ENCODE measurements at regions of chr4 and their contacts with region 1.

Region 1: GRCh38 chr4:76504613-76505465 is 69.8 kb downstream of the SHROOM3 start:
- DNase-seq: no peak
- H3K4me3 ChIP-seq: no peak overlapping the region
- H3K27ac ChIP-seq: no peak overlapping the region
- H3K4me1 ChIP-seq: no peaks in the 10 kb centered on the region
- H3K27me3 ChIP-seq: no peaks in the 10 kb centered on the region
- CTCF ChIP-seq: peak; percentile 60 to 76 (median 68)
- EP300 ChIP-seq: no peak
- POLR2A ChIP-seq: no peak

Region 2: GRCh38 chr4:76293772-76294171 is 211.1 kb before region 1 on chr4:
- in situ Hi-C with region 1: no loop called
- intact Hi-C with region 1: no loop called
- DNase-seq: no peak
- H3K4me3 ChIP-seq: no peak overlapping the region
- H3K27ac ChIP-seq: no peak overlapping the region
- H3K4me1 ChIP-seq: peaks cover 0 to 5% (median 0%) of the 10 kb centered on the region in 4 donors
- H3K27me3 ChIP-seq: no peaks in the 10 kb centered on the region
- CTCF ChIP-seq: no peak
- EP300 ChIP-seq: no peak
- POLR2A ChIP-seq: no peak

Region 3: GRCh38 chr4:76305971-76306881 is 198.6 kb before region 1 on chr4 and contains the start of gene STBD1:
- in situ Hi-C with region 1: no loop called
- intact Hi-C with region 1: loop called (anchors 1 kb)
- DNase-seq: peak; percentile 89
- H3K4me3 ChIP-seq: peak within 1 kb of the TSS; percentile 66 to 89 (median 85)
- H3K27ac ChIP-seq: peak within 1 kb of the TSS; percentile 89 to 96 (median 93)
- H3K4me1 ChIP-seq: peaks cover 10 to 61% (median 29%) of the 10 kb centered on the region in 4 donors
- H3K27me3 ChIP-seq: no peaks in the 10 kb centered on the region
- CTCF ChIP-seq: no peak
- EP300 ChIP-seq: no peak
- POLR2A ChIP-seq: peak; percentile 88
- total RNA-seq, gene STBD1: 5.4 to 48.7 (median 17.0) TPM

Region 4: DNA sequence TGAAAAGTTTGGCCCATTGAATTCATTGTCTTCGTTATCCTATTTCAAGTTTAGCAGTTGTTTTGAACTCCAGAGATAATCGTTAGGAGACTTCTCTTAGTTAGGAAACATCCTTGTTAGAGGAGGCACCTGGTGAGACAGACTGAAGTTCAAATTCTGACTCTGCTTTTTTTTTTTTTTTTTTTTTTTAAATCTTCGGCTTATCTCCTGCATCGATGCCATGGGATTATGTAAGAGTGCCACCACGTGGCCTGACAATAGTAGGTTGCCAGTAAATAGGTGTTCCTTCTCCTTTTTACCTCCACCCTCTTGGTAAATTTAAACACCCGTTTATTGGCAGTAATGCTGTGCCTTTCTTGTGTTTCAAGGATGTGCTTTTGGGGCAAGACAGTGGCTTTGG is 243.8 kb after region 1 on chr4:
- in situ Hi-C with region 1: loop called (anchors 5 to 25 kb)
- intact Hi-C with region 1: loop called (anchors 5 kb)
- DNase-seq: peak; percentile 63
- H3K4me3 ChIP-seq: no peak overlapping the region
- H3K27ac ChIP-seq: peak overlapping the region in 2 of 4 donors; percentile 2 to 28
- H3K4me1 ChIP-seq: peaks cover 0 to 24% (median 3%) of the 10 kb centered on the region in 4 donors
- H3K27me3 ChIP-seq: no peaks in the 10 kb centered on the region
- CTCF ChIP-seq: peak in 3 of 5 experiments; percentile 22 to 30 (median 28)
- EP300 ChIP-seq: no peak
- POLR2A ChIP-seq: no peak

Region 5: DNA sequence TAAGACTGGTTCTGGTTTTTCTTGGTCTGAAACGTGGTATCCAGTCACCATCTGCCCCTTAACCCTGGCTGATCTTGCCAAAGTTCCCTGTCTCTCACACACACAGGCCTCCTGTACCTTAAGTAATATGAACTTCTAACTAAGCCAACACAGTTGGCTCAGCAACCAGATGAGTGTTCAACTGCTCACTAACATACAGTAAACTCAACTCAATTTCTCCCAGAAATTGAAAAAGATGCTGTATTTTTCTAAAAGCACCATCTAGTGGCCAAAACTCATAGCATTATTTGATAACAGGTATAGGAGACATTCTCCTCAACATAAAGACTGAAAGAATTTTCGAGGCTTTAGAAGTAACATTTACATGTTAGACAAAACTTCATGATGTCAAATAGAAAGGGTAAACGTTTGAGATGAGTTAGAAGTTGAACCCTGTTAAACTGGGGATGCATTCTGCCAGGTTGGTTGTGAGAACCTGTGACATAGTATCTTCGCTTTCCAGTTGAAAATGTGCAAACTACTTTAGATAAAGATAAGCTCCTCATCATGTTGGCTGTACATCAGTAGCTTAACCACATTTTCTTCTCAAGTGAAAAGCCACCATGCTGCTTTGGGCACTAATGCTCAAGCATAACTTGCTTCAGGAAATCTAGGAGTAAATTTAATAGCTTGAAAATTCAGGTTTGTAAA is 539.8 kb after region 1 on chr4:
- in situ Hi-C with region 1: loop called in 3 of 4 experiments (anchors 10 to 25 kb)
- intact Hi-C with region 1: no loop called
- DNase-seq: no peak
- H3K4me3 ChIP-seq: no peak overlapping the region
- H3K27ac ChIP-seq: peak overlapping the region in 3 of 4 donors; percentile 32 to 47 (median 41)
- H3K4me1 ChIP-seq: peaks cover 0 to 22% (median 5%) of the 10 kb centered on the region in 4 donors
- H3K27me3 ChIP-seq: no peaks in the 10 kb centered on the region
- CTCF ChIP-seq: peak; percentile 47 to 69 (median 55)
- EP300 ChIP-seq: no peak
- POLR2A ChIP-seq: no peak

Measured in transverse colon (tissue), 4 donors.